ENCODE measurements at regions of chr2 and their contacts with region 1.

Region 1: GRCh38 chr2:28406276-28407096 is 13.8 kb downstream of the FOSL2 start:
- DNase-seq: peak; percentile 84 to 87
- ATAC-seq: peak; percentile 61 to 85 (median 64)
- H3K4me3 ChIP-seq: no peak overlapping the region
- H3K4me3 Mint-ChIP-seq: peak overlapping the region; percentile 84
- H3K27ac ChIP-seq: peak overlapping the region; percentile 96
- H3K27ac Mint-ChIP-seq: peak overlapping the region; percentile 96 to 100
- H3K4me1 ChIP-seq: peaks cover 98% of the 10 kb centered on the region
- H3K4me1 Mint-ChIP-seq: peaks cover 60 to 64% of the 10 kb centered on the region in 2 donors
- H3K27me3 ChIP-seq: no peaks in the 10 kb centered on the region
- H3K27me3 Mint-ChIP-seq: no peaks in the 10 kb centered on the region
- CTCF ChIP-seq: peak; percentile 24

Region 2: GRCh38 chr2:27890146-27890923 is 516.2 kb before region 1 on chr2 and contains the starts of genes BABAM2 and RBKS:
- intact Hi-C with region 1: loop called (anchors 5 kb)
- DNase-seq: peak; percentile 91 to 96
- ATAC-seq: peak; percentile 76 to 90 (median 78)
- H3K4me3 ChIP-seq: peak within 1 kb of the TSS; percentile 87
- H3K4me3 Mint-ChIP-seq: peak within 1 kb of the TSS; percentile 99
- H3K27ac ChIP-seq: peak within 1 kb of the TSS; percentile 100
- H3K27ac Mint-ChIP-seq: peak within 1 kb of the TSS; percentile 100
- H3K4me1 ChIP-seq: peaks cover 17% of the 10 kb centered on the region
- H3K4me1 Mint-ChIP-seq: peaks cover 30 to 41% of the 10 kb centered on the region in 2 donors
- H3K27me3 ChIP-seq: no peaks in the 10 kb centered on the region
- H3K27me3 Mint-ChIP-seq: peaks cover 0 to 4% of the 10 kb centered on the region in 2 donors
- CTCF ChIP-seq: no peak
- total RNA-seq, gene BABAM2: 54.6 to 66.1 (median 59.5) TPM
- total RNA-seq, gene RBKS: 11.5 to 20.9 (median 12.8) TPM

Region 3: GRCh38 chr2:28356095-28356911 is 50.2 kb before region 1 on chr2:
- intact Hi-C with region 1: loop called (anchors 1 kb)
- DNase-seq: peak in 1 of 2 donors; percentile 73
- ATAC-seq: peak in 1 of 3 donors; percentile 14
- H3K4me3 ChIP-seq: no peak overlapping the region
- H3K4me3 Mint-ChIP-seq: no peak overlapping the region
- H3K27ac ChIP-seq: peak overlapping the region; percentile 29
- H3K27ac Mint-ChIP-seq: peak overlapping the region; percentile 63 to 80
- H3K4me1 ChIP-seq: peaks cover 59% of the 10 kb centered on the region
- H3K4me1 Mint-ChIP-seq: peaks cover 24 to 55% of the 10 kb centered on the region in 2 donors
- H3K27me3 ChIP-seq: no peaks in the 10 kb centered on the region
- H3K27me3 Mint-ChIP-seq: no peaks in the 10 kb centered on the region
- CTCF ChIP-seq: no peak

Region 4: GRCh38 chr2:28423856-28424605 is 17.5 kb after region 1 on chr2:
- intact Hi-C with region 1: loop called (anchors 1 kb)
- DNase-seq: peak in 1 of 2 donors; percentile 77
- ATAC-seq: peak; percentile 77 to 92 (median 82)
- H3K4me3 ChIP-seq: no peak overlapping the region
- H3K4me3 Mint-ChIP-seq: peak overlapping the region; percentile 87
- H3K27ac ChIP-seq: peak overlapping the region; percentile 95
- H3K27ac Mint-ChIP-seq: peak overlapping the region; percentile 93 to 96
- H3K4me1 ChIP-seq: peaks cover 39% of the 10 kb centered on the region
- H3K4me1 Mint-ChIP-seq: peaks cover 64 to 68% of the 10 kb centered on the region in 2 donors
- H3K27me3 ChIP-seq: no peaks in the 10 kb centered on the region
- H3K27me3 Mint-ChIP-seq: no peaks in the 10 kb centered on the region
- CTCF ChIP-seq: no peak

Region 5: GRCh38 chr2:28544919-28545589 is 138.6 kb after region 1 on chr2:
- intact Hi-C with region 1: loop called (anchors 5 kb)
- DNase-seq: peak; percentile 20 to 61
- ATAC-seq: peak; percentile 61 to 80 (median 71)
- H3K4me3 ChIP-seq: no peak overlapping the region
- H3K4me3 Mint-ChIP-seq: peak overlapping the region; percentile 71
- H3K27ac ChIP-seq: peak overlapping the region; percentile 74
- H3K27ac Mint-ChIP-seq: peak overlapping the region; percentile 75 to 85
- H3K4me1 ChIP-seq: peaks cover 76% of the 10 kb centered on the region
- H3K4me1 Mint-ChIP-seq: peaks cover 43 to 54% of the 10 kb centered on the region in 2 donors
- H3K27me3 ChIP-seq: no peaks in the 10 kb centered on the region
- H3K27me3 Mint-ChIP-seq: no peaks in the 10 kb centered on the region
- CTCF ChIP-seq: no peak

Region 6: GRCh38 chr2:28566521-28567041 is 160.1 kb after region 1 on chr2:
- intact Hi-C with region 1: no loop called
- DNase-seq: peak; percentile 92 to 94
- ATAC-seq: peak; percentile 98 to 99 (median 99)
- H3K4me3 ChIP-seq: peak overlapping the region; percentile 95
- H3K4me3 Mint-ChIP-seq: peak overlapping the region; percentile 91
- H3K27ac ChIP-seq: peak overlapping the region; percentile 17
- H3K27ac Mint-ChIP-seq: peak overlapping the region; percentile 68 to 93
- H3K4me1 ChIP-seq: peaks cover 14% of the 10 kb centered on the region
- H3K4me1 Mint-ChIP-seq: peaks cover 5 to 9% of the 10 kb centered on the region in 2 donors
- H3K27me3 ChIP-seq: no peaks in the 10 kb centered on the region
- H3K27me3 Mint-ChIP-seq: peaks cover 0 to 11% of the 10 kb centered on the region in 2 donors
- CTCF ChIP-seq: peak; percentile 99

Measured in natural killer cell (primary cell).